ENCODE measurements at regions of chr7 and their contacts with region 1.

Region 1: GRCh38 chr7:100673300-100673941 is at the start of gene GNB2:
- DNase-seq: peak; percentile 99
- H3K4me3 Mint-ChIP-seq: peak within 1 kb of the TSS; percentile 94
- H3K27ac Mint-ChIP-seq: peak within 1 kb of the TSS; percentile 95
- H3K4me1 Mint-ChIP-seq: peaks cover 6% of the 10 kb centered on the region
- H3K27me3 Mint-ChIP-seq: peaks cover 12% of the 10 kb centered on the region
- total RNA-seq, gene GNB2: 221 and 224 TPM in 2 replicates

Region 2: GRCh38 chr7:100428967-100429636 is 244.3 kb before region 1 on chr7:
- intact Hi-C with region 1: loop called (anchors 1 kb)
- DNase-seq: peak; percentile 100
- H3K4me3 Mint-ChIP-seq: peak overlapping the region; percentile 90
- H3K27ac Mint-ChIP-seq: peak overlapping the region; percentile 96
- H3K4me1 Mint-ChIP-seq: peaks cover 28% of the 10 kb centered on the region
- H3K27me3 Mint-ChIP-seq: peaks cover 2% of the 10 kb centered on the region

Region 3: GRCh38 chr7:100545360-100546128 is 127.9 kb before region 1 on chr7:
- intact Hi-C with region 1: loop called (anchors 10 kb)
- DNase-seq: peak; percentile 36
- H3K4me3 Mint-ChIP-seq: peak overlapping the region; percentile 76
- H3K27ac Mint-ChIP-seq: peak overlapping the region; percentile 99
- H3K4me1 Mint-ChIP-seq: peaks cover 85% of the 10 kb centered on the region
- H3K27me3 Mint-ChIP-seq: no peaks in the 10 kb centered on the region

Region 4: GRCh38 chr7:100604028-100604975 is 69.1 kb before region 1 on chr7:
- intact Hi-C with region 1: loop called (anchors 1 kb)
- DNase-seq: peak; percentile 71
- H3K4me3 Mint-ChIP-seq: peak overlapping the region; percentile 79
- H3K27ac Mint-ChIP-seq: peak overlapping the region; percentile 84
- H3K4me1 Mint-ChIP-seq: peaks cover 6% of the 10 kb centered on the region
- H3K27me3 Mint-ChIP-seq: peaks cover 3% of the 10 kb centered on the region

Region 5: DNA sequence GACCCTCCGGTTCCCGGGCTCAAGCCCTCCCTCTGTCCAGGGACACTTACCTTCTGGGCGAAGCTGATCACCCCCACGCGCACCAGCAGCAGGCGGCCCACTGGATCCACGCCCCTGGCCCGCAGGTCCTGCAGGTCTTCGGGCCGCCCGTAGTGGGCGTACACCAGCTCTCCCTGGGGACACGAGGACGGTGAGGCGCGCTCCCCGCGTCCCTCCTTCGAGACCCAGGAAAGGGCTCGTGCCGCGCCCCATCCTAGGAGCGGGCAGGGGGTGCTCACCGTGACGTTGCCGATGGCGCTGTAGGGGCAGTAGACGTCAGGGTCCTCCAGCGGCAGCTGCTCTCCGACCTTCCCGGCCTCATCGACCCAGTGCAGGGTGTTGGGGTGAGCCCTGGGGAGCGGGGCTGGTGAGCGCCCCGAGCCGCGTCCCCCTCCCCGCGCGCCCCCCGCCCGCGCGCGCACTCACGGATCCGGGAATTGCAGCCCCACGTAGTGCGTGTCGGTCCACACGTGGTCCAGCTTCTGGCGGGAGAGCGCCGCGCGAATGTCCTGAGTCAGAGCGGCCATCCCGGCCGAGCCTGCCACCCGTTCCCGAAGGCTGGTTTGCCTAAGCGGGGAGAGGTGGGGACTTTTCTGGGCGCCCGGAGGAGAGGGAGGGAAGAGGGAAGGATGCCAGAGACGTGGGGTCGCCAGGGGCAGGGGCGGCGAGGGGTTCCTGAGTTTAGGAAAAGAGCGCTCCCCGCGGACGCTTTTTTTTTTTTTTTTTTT is 40.3 kb before region 1 on chr7:
- intact Hi-C with region 1: loop called (anchors 1 kb)
- DNase-seq: peak; percentile 61
- H3K4me3 Mint-ChIP-seq: peak overlapping the region; percentile 89
- H3K27ac Mint-ChIP-seq: peak overlapping the region; percentile 95
- H3K4me1 Mint-ChIP-seq: peaks cover 28% of the 10 kb centered on the region
- H3K27me3 Mint-ChIP-seq: no peaks in the 10 kb centered on the region

Region 6: GRCh38 chr7:100691676-100692577 is 18.5 kb after region 1 on chr7:
- intact Hi-C with region 1: loop called (anchors 1 kb)
- DNase-seq: peak; percentile 74
- H3K4me3 Mint-ChIP-seq: peak overlapping the region; percentile 90
- H3K27ac Mint-ChIP-seq: peak overlapping the region; percentile 0
- H3K4me1 Mint-ChIP-seq: peaks cover 23% of the 10 kb centered on the region
- H3K27me3 Mint-ChIP-seq: peaks cover 5% of the 10 kb centered on the region

Region 7: GRCh38 chr7:100719523-100720319 is 46.3 kb after region 1 on chr7:
- intact Hi-C with region 1: no loop called
- DNase-seq: no peak
- H3K4me3 Mint-ChIP-seq: no peak overlapping the region
- H3K27ac Mint-ChIP-seq: no peak overlapping the region
- H3K4me1 Mint-ChIP-seq: no peaks in the 10 kb centered on the region
- H3K27me3 Mint-ChIP-seq: peaks cover 44% of the 10 kb centered on the region

Measured in activated T-helper 2 cell treated with anti-CD3 and anti-CD28 coated beads, Interferon-gamma antibody, Interleukin-2, Interleukin-4, amounts not matched to agents 10 μg/mL and 5 μg/mL and 100 μg/mL, durations not matched to agents 14 hours and 24 hours and 36 hours (primary cell).